Right ventricle myocardium inferior (tissue), 1 donor: ENCODE measurements at regions of chr1 and their contacts with region 1.

Region 1: GRCh38 chr1:201970334-201971159 is 11.9 kb upstream of the RNPEP start:
- DNase-seq: no peak
- ATAC-seq: no peak

Region 2: DNA sequence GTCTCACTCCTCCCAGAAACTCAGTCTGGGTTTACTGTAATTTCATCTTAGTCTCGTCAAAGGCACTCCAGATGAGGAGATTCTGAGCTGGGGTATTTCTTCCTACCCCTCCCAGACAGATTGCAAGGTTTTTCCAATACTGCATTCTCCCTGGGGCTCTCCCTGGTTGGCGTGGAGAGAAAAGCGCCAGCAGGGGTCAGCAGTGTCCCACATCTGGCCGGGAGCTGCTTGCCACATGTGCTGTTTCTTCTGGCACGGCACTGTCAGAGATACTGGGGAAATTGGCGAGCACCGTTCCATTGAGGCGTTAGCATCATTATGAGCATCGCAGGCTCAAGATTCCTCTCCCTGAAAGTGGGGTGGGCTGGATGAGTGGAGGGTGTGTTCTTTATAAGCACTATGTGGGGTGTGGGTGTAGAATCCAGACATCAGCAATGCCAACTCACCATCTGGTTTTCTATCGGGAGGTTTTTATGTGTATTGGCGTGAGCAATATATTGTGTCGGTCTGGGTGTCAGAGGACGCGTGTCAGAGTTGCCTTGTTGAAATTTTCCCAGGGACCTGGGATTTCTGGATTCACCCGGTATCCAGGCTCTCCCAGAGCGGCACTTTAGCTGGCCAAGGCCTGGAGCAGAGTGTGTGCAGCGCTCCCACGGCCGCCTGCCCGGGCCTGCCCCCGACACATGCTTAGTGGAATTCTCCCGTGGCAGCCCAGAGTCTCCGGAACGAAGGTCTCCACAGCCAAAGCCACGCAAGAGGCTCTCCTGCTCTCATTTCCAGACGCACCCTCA is 439.6 kb before region 1 on chr1:
- intact Hi-C with region 1: loop called (anchors 10 kb)
- DNase-seq: peak; percentile 89
- ATAC-seq: peak; percentile 88

Region 3: GRCh38 chr1:201709564-201710295 is 260.8 kb before region 1 on chr1:
- intact Hi-C with region 1: loop called (anchors 5 kb)
- DNase-seq: peak; percentile 87
- ATAC-seq: peak; percentile 51

Region 4: DNA sequence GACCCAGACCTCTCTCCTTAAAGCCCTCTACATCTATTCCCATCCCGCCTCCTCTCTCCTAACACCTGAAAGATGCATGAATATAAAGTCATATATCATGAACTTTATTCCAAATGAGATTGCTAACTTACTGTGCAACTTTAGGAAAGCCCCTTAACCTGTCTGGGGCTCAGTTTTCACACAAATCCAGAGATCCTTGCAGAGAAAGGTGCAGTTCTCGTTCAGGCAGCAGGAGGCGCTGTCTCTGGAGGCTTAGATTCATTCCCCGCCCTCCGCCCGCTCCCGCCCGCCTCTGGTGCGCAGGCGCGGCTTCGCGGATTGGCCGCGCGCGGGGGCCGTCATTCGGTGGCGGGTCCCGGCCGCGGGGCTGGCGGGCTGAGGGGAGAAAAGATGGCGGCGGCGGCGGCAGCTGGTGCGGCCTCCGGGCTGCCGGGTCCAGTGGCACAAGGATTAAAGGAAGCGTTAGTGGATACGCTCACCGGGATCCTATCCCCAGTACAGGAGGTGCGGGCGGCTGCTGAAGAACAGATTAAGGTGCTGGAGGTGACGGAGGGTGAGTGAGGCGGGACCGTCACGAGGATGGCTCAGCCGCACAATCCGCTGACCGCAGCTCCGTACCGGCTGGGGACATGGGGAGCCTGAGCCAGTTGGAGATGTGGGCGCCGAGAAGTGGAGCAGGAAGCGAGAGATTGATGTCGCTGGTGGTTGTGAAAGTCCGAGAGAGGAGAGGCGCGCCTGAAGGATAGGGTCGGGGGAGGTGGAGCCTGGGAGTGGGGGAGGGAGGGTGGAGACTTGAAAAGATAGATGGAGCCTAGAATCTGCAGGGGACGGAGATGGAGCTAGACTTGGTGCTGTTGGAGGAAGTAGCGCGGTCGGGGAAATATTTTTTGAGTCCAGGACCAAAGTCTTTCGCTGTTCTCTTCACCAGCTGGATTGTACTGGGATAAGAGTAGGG is 141.4 kb before region 1 on chr1 and contains the start of gene IPO9:
- intact Hi-C with region 1: loop called (anchors 5 kb)
- DNase-seq: peak; percentile 96
- ATAC-seq: peak; percentile 94
- total RNA-seq, gene IPO9: 22.6 TPM

Region 5: DNA sequence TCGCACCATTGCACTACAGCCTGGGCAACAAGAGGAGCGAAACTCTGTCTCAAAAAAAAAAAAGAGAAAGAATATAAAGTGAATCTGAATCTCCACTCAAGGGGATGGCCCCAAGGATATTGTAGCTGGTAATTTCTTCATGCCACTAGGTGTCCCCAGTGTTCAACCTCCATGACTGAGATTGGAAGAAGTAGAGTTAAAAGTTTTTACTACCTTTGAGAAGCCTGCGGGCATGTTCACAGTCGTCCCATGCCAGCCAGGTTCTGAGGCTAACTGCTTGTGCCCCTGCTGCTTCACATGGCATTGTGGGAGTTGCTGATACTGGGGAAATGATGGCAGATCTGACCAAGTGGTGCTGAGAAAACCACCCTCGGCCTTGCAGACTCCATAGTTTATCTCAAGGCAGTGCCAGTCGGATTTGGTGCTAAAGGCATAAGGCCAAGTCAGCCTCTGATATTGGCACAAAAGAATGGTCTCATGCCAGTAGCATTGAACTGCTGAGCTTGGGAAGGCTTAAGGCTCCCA is 92.6 kb before region 1 on chr1:
- intact Hi-C with region 1: loop called (anchors 2 kb)
- DNase-seq: no peak
- ATAC-seq: peak; percentile 57

Region 6: DNA sequence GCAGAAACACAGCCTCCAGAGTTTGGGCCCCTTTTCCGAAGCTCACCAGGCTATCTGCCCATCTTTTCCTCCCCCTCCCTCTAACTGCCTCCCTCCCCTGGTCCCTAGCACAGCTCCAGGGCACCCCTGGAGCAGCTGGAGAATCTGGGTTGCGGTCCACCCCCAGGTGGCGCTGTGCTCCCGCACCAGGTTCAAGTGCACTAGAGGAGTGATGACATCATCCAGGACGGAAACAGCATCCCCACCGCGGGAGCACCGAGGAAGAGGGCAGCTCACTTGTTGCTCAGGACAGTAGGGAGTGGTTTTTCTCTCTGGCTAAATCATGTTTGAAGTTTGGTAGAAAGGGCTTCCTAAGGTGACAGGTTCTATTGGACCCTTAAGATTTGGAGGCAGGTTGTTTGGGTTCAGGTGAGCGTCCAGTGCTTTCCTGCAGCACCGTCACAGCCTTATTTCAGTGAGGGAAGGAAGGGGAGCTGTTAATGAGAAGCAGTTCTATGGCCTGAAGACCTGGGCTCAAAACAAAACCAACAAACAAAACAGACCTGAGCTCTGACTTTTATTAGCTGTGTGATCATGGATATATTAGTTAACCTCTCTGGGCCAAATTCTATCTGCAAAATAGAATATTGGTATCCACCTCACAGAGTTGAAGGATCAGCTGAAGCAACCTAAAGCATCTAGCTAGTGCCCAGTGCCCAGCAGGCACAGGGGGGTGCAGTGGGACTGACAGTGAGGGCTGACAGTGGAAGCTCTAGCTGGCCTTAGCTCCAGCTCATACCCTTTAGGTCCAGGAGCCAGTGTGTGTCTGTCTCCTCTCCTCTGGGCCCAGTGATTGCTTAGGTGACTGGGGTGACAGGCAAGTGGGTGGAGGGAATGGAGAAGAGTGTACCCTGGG is 74.4 kb before region 1 on chr1:
- intact Hi-C with region 1: loop called (anchors 1 kb)
- DNase-seq: peak; percentile 92
- ATAC-seq: peak; percentile 88